ENCODE measurements at regions of chr1 and their contacts with region 1.

Region 1: GRCh38 chr1:46036894-46037839 is 95.3 kb downstream of the PIK3R3 start:
- DNase-seq: peak; percentile 87 to 93
- ATAC-seq: peak; percentile 50 to 67 (median 60)
- H3K4me3 ChIP-seq: no peak overlapping the region
- H3K27ac ChIP-seq: peak overlapping the region; percentile 42
- H3K4me1 ChIP-seq: peaks cover 48% of the 10 kb centered on the region
- H3K27me3 ChIP-seq: no peaks in the 10 kb centered on the region
- CTCF ChIP-seq: peak; percentile 98

Region 2: DNA sequence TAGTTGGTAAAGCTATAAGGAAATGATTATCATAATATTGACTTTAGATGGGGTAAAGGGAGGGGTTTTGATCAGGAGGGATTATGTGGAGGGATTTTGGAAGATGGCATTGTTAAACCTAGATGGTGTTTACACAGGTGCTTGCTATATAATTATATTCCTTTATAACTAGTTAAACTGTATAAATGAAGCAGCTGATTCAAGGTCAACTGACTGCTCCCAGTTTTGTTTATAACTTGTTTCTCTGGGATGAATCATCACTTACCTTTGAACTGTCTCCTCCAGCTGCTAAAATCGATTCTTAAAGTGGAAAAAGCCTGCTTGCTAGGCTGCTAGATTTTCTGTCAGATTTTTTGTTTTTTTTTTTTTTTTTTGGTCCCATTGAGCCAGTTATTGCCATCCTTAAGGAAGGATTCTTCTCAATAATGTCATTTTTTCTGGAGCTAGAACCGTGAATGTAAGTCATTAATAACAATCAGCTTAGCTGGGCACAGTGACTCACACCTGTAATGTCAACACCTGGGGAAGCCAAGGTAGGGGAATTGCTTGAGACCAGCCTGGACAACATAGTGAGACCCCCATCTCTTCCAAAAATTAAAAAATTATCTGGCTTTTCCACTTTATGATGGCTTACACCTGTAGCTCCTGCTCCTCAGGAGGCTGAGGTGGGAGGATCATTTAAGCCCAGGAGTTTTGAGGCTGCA is 57.9 kb before region 1 on chr1:
- intact Hi-C with region 1: no loop called
- DNase-seq: no peak
- ATAC-seq: peak in 1 of 4 donors; percentile 31
- H3K4me3 ChIP-seq: no peak overlapping the region
- H3K27ac ChIP-seq: peak overlapping the region; percentile 28
- H3K4me1 ChIP-seq: peaks cover 9% of the 10 kb centered on the region
- H3K27me3 ChIP-seq: no peaks in the 10 kb centered on the region
- CTCF ChIP-seq: no peak

Region 3: DNA sequence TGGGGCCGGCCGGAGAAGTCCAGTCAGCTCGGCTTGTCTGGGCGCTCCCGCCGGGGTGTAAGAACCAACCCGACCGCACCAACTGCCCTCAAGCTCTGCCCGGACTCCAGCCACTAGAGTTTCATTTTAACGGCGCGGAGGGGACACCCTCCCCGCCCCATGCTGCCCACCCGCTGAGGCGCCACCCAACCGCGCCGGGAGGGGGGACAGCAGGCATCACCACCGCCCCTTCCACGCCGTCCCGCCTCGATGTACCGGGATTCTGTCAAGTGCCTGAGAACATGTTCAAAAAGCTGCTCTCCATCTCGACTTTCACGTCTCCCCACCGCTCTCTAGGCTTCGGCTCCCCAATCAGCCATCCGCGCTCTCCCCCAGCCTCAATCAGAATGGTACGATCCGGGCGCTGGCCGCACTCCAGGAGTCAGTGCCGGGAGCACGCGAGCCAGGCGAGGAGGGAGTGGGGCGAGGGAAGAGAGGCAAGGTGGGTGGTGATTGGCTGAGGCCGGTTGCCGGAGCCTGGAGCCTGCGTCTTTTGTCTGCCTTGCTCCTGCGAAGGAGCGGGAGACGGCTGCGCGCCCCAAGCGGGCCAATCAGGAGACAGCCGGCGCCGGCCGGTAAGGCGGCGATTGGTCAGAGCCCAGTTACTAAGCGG is 95.5 kb after region 1 on chr1 and contains the start of gene PIK3R3:
- intact Hi-C with region 1: loop called (anchors 2 to 5 kb)
- DNase-seq: peak; percentile 98 to 99
- ATAC-seq: peak; percentile 94 to 99 (median 96)
- H3K4me3 ChIP-seq: peak within 1 kb of the TSS; percentile 80
- H3K27ac ChIP-seq: peak within 1 kb of the TSS; percentile 96
- H3K4me1 ChIP-seq: peaks cover 36% of the 10 kb centered on the region
- H3K27me3 ChIP-seq: peaks cover 0 to 4% (median 0%) of the 10 kb centered on the region in 3 donors
- CTCF ChIP-seq: no peak
- total RNA-seq, gene PIK3R3: 17.3 to 24.2 (median 21.2) TPM

Region 4: DNA sequence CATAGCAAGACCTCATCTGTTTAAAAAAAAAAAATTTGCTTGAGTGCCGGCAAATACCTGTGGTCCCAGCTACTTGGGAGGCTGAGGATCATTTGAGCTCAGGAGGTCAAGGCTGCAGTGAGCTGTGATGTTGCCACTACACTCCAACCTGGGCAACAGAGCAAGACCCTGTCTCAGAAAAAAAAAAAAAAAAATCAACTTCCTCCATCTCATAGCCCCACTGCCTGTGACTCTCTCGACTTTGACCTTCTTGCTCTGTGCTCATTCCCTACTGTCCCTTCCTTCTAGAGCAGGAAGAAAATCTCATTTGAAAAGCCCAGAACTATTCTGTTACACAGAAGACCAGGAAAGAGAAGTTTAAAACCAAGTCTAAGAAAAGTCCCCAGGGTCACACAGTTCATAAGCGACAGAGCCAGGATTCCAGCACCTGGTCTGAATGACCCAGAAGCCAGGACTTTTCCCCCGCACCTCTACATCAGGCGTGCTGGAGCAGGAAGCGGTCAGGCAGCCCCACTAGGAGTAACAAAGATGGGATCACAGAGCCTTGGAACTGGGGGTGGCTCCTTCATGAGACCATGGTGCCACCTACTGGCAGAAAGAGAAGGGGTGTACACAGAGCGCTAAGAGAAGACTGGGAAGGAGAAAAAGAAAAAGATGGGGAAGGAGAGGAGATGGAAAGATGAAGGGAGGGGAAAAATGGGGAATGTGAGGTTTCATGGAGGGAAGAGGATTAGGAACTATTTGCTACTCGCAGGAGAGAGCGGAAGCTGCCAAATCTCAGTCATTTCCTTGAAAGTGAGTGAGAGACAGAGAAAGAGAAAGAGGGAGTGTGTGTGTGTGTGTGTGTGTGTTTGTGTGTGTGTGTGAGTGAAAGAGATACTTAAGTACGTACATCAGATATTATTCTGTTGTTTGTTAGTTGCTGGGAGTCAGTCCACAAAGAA is 142.2 kb after region 1 on chr1:
- intact Hi-C with region 1: loop called (anchors 1 kb)
- DNase-seq: peak; percentile 62 to 79
- ATAC-seq: peak; percentile 66 to 74 (median 70)
- H3K4me3 ChIP-seq: peak overlapping the region; percentile 28
- H3K27ac ChIP-seq: peak overlapping the region; percentile 63
- H3K4me1 ChIP-seq: peaks cover 35% of the 10 kb centered on the region
- H3K27me3 ChIP-seq: no peaks in the 10 kb centered on the region
- CTCF ChIP-seq: peak; percentile 91

Region 5: DNA sequence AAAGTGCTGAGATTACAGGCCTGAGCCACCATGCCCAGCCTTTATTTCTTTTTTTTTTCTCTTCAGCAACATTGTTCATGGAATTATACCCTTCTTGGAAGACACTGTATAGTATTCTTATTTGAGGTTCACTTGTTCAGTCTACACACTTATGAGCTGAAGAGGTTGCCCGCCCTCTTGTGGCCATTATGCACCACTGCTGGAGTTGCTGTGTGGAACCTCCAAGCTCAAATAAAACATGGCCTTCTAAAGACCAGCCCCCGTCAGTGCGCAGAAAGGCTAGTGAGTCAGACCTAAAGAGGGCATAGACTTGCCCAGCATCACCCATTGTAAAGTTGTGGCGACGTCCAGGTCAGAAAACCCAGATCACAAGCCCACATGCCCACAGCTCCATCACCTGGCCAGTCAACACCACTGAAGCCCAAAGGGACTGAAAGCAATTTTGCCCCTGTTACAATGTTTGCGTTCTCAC is 186.3 kb after region 1 on chr1:
- intact Hi-C with region 1: loop called (anchors 1 to 5 kb)
- DNase-seq: peak; percentile 56 to 75
- ATAC-seq: peak; percentile 90 to 98 (median 94)
- H3K4me3 ChIP-seq: no peak overlapping the region
- H3K27ac ChIP-seq: no peak overlapping the region
- H3K4me1 ChIP-seq: peaks cover 4% of the 10 kb centered on the region
- H3K27me3 ChIP-seq: no peaks in the 10 kb centered on the region
- CTCF ChIP-seq: peak; percentile 90